Activated CD4-positive, alpha-beta T cell treated with anti-CD3 and anti-CD28 coated beads, Interleukin-2, amount 10 ng/mL, durations not matched to agents 7 days and 5 days (primary cell): ENCODE measurements at regions of chr19 and their contacts with region 1.

Region 1: GRCh38 chr19:14031719-14032480 is at the start of gene IL27RA:
- DNase-seq: peak; percentile 88
- H3K4me3 Mint-ChIP-seq: peak within 1 kb of the TSS; percentile 93
- H3K27ac Mint-ChIP-seq: peak within 1 kb of the TSS; percentile 96
- H3K4me1 Mint-ChIP-seq: peaks cover 29% of the 10 kb centered on the region
- H3K27me3 Mint-ChIP-seq: peaks cover 2% of the 10 kb centered on the region
- total RNA-seq, gene IL27RA: 66.5 to 70.3 TPM

Region 2: GRCh38 chr19:14021474-14021873 is 10.4 kb before region 1 on chr19:
- CTCF ChIA-PET with region 1: interaction called, 20 read pairs
- POLR2A ChIA-PET with region 1: interaction called, 5 read pairs
- DNase-seq: no peak
- H3K4me3 Mint-ChIP-seq: no peak overlapping the region
- H3K27ac Mint-ChIP-seq: no peak overlapping the region
- H3K4me1 Mint-ChIP-seq: peaks cover 17% of the 10 kb centered on the region
- H3K27me3 Mint-ChIP-seq: no peaks in the 10 kb centered on the region